ENCODE measurements at regions of chr10 and their contacts with region 1.

Region 1: GRCh38 chr10:31536302-31536701 is 217.3 kb downstream of the ZEB1 start:
- H3K4me3 Mint-ChIP-seq: no peak overlapping the region
- H3K27ac Mint-ChIP-seq: no peak overlapping the region
- H3K4me1 Mint-ChIP-seq: no peaks in the 10 kb centered on the region
- H3K27me3 Mint-ChIP-seq: no peaks in the 10 kb centered on the region

Region 2: GRCh38 chr10:31584098-31584631 is 47.9 kb after region 1 on chr10:
- intact Hi-C with region 1: no loop called
- H3K4me3 Mint-ChIP-seq: peak overlapping the region; percentile 44
- H3K27ac Mint-ChIP-seq: peak overlapping the region; percentile 87
- H3K4me1 Mint-ChIP-seq: peaks cover 81% of the 10 kb centered on the region
- H3K27me3 Mint-ChIP-seq: no peaks in the 10 kb centered on the region

Region 3: GRCh38 chr10:31599626-31600504 is 63.6 kb after region 1 on chr10:
- intact Hi-C with region 1: loop called (anchors 10 kb)
- H3K4me3 Mint-ChIP-seq: no peak overlapping the region
- H3K27ac Mint-ChIP-seq: peak overlapping the region; percentile 32
- H3K4me1 Mint-ChIP-seq: peaks cover 34% of the 10 kb centered on the region
- H3K27me3 Mint-ChIP-seq: no peaks in the 10 kb centered on the region

Measured in dendritic cell treated with granulocyte-macrophage colony-stimulating factor and Interleukin-4, amounts not matched to agents 40 ng/mL and 50 ng/mL, for 4 days (primary cell).